ENCODE measurements at regions of chr11 and their contacts with region 1.

Region 1: DNA sequence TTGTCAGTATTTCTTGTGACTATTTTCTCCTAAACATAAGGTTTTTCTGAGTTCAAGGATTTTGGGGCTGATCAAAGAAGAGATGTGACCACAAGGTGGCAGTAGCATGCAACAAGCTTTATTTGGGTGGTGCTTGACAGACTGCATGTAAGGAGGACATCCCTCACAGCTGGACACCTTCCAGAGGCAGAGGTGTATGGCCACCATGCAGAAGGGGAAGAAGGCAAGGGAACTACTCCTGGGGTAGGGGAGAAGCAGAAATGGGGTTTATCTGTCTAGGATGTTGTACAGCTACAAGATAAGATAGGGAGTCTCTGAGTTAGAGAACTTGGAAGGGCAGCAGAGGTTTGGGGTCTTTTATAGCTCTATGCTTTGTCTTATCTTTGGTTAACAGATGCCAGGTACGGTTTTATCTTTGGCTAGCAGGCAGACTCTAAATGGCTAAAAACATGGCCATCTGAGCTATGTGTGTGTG is 5.1 kb upstream of the BIRC2 start:
- DNase-seq: peak; percentile 89
- ATAC-seq: peak; percentile 83
- H3K4me3 ChIP-seq: no peak overlapping the region
- H3K27ac ChIP-seq: no peak overlapping the region
- H3K4me1 ChIP-seq: peaks cover 2 to 29% of the 10 kb centered on the region in 2 experiments; a peak in 3 of 4 replicates
- H3K27me3 ChIP-seq: no peaks in the 10 kb centered on the region
- CTCF ChIP-seq: peak; percentile 77 to 87 (median 86)
- POLR2A ChIP-seq: no peak
- RAD21 ChIP-seq: peak; percentile 91

Region 2: DNA sequence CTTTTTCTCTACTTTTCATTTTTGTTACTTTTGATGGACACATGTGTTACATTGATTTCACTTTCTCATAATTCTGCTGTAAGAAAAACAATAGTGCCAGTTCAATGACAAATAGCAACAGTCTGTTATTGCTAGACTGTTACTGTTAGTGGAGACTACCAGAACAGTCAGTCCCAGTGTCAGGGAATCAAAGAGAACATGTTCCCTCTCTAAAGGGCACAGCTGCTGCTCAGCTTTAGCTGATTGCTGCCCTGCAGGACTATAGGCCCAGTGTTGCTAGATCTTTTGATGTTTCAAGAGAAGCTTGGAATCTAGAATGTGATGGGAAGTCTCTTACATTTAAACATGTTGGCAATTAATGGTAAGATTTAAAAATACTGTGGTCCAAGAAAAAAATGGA is 21.2 kb before region 1 on chr11:
- CTCF ChIA-PET with region 1: interaction called, 10 read pairs
- POLR2A ChIA-PET with region 1: no interaction called
- RAD21 ChIA-PET with region 1: no interaction called
- intact Hi-C with region 1: no loop called
- DNase-seq: no peak
- ATAC-seq: no peak
- H3K4me3 ChIP-seq: no peak overlapping the region
- H3K27ac ChIP-seq: no peak overlapping the region
- H3K4me1 ChIP-seq: peaks cover 7 to 31% of the 10 kb centered on the region in 2 experiments
- H3K27me3 ChIP-seq: no peaks in the 10 kb centered on the region
- CTCF ChIP-seq: no peak
- POLR2A ChIP-seq: no peak
- RAD21 ChIP-seq: no peak

Region 3: GRCh38 chr11:102451681-102452460 is 110.0 kb after region 1 on chr11:
- CTCF ChIA-PET with region 1: no interaction called
- POLR2A ChIA-PET with region 1: no interaction called
- RAD21 ChIA-PET with region 1: no interaction called
- intact Hi-C with region 1: no loop called
- DNase-seq: no peak
- ATAC-seq: peak; percentile 52
- H3K4me3 ChIP-seq: peak overlapping the region; percentile 82 to 95
- H3K27ac ChIP-seq: peak overlapping the region; percentile 82
- H3K4me1 ChIP-seq: peaks cover 9 to 74% of the 10 kb centered on the region in 2 experiments
- H3K27me3 ChIP-seq: no peaks in the 10 kb centered on the region
- CTCF ChIP-seq: peak in 1 of 3 experiments; percentile 14; a peak in 1 of 6 replicates
- POLR2A ChIP-seq: no peak
- RAD21 ChIP-seq: no peak

Region 4: GRCh38 chr11:102495161-102496042 is 153.5 kb after region 1 on chr11:
- CTCF ChIA-PET with region 1: interaction called, 12 read pairs
- POLR2A ChIA-PET with region 1: interaction called, 3 read pairs
- RAD21 ChIA-PET with region 1: interaction called in 1 of 2 experiments, 7 read pairs
- intact Hi-C with region 1: loop called (anchors 1 kb)
- DNase-seq: peak; percentile 81
- ATAC-seq: peak; percentile 81
- H3K4me3 ChIP-seq: peak overlapping the region; percentile 20 to 38
- H3K27ac ChIP-seq: no peak overlapping the region
- H3K4me1 ChIP-seq: peaks cover 13 to 35% of the 10 kb centered on the region in 2 experiments
- H3K27me3 ChIP-seq: no peaks in the 10 kb centered on the region
- CTCF ChIP-seq: peak; percentile 52 to 88 (median 79)
- POLR2A ChIP-seq: no peak
- RAD21 ChIP-seq: peak; percentile 95

Region 5: DNA sequence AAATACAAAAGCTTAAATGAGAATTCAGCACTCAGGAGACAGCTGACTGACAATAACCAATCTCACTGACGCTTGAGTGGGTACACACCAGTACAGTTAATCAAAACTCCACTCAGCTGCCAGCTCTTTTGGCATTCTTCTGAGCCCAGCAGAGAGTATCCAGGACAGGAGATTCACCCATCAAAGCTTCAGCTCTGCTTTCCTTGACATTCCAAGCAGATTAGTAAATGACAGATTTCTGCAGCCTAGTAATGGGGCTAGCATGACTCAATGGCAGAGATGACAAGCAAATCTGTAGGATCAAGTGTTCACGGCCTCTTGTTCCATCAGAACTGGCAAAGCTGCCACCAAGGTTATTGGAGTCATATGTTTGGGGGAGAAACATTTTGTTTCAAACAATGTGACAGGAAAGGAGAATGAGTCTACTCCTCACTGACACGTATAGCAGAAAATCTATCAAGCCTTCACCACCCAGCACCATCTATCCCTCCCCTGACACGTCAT is 1187.4 kb after region 1 on chr11:
- CTCF ChIA-PET with region 1: no interaction called
- POLR2A ChIA-PET with region 1: no interaction called
- RAD21 ChIA-PET with region 1: no interaction called
- intact Hi-C with region 1: no loop called
- DNase-seq: no peak
- ATAC-seq: peak; percentile 47; the same call in 1 of the 2 replicates
- H3K4me3 ChIP-seq: no peak overlapping the region
- H3K27ac ChIP-seq: no peak overlapping the region
- H3K4me1 ChIP-seq: peaks cover 4 to 27% of the 10 kb centered on the region in 2 experiments; a peak in 3 of 4 replicates
- H3K27me3 ChIP-seq: no peaks in the 10 kb centered on the region
- CTCF ChIP-seq: no peak
- POLR2A ChIP-seq: no peak
- RAD21 ChIP-seq: no peak